CD4-positive, alpha-beta memory T cell (primary cell): ENCODE measurements at regions of chr2 and their contacts with region 1.

Region 1: DNA sequence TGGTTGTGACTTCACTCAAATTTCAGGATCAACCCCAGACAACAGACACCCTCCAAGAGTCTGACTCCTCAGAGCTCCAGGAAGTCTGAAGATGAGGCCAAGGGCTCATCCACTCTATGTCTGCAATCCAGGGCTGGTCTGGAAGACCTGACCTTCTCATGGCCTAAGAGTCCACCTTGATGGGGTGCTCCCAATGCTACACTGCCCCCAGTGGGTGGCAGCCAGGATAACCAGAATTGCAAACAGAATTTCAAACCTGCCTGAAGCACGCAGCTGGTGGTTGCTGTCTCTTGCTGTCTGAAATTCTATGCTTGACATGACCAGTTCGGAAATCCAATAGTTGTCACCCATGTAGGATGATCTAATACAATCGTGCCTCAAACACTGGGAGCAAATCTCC is 96.0 kb downstream of the UXS1 start:
- DNase-seq: no peak
- H3K4me3 ChIP-seq: no peak overlapping the region
- H3K4me3 Mint-ChIP-seq: peak overlapping the region in 3 of 8 donors; percentile 5 to 41 (median 34)
- H3K27ac ChIP-seq: peak overlapping the region; percentile 69
- H3K27ac Mint-ChIP-seq: peak overlapping the region in 6 of 7 donors; percentile 1 to 87 (median 50)
- H3K4me1 ChIP-seq: peaks cover 56% of the 10 kb centered on the region
- H3K4me1 Mint-ChIP-seq: peaks cover 25 to 57% (median 41%) of the 10 kb centered on the region in 4 donors
- H3K27me3 ChIP-seq: no peaks in the 10 kb centered on the region
- H3K27me3 Mint-ChIP-seq: no peaks in the 10 kb centered on the region

Region 2: GRCh38 chr2:105576440-105577252 is 521.4 kb before region 1 on chr2:
- CTCF ChIA-PET with region 1: interaction called, 5 read pairs
- POLR2A ChIA-PET with region 1: interaction called, 7 read pairs
- intact Hi-C with region 1: loop called (anchors 1 kb)
- DNase-seq: peak in 4 of 5 donors; percentile 47 to 56 (median 52)
- H3K4me3 ChIP-seq: no peak overlapping the region
- H3K4me3 Mint-ChIP-seq: peak overlapping the region in 2 of 8 donors; percentile 0 to 27
- H3K27ac ChIP-seq: no peak overlapping the region
- H3K27ac Mint-ChIP-seq: peak overlapping the region; percentile 6 to 94 (median 91)
- H3K4me1 ChIP-seq: peaks cover 13% of the 10 kb centered on the region
- H3K4me1 Mint-ChIP-seq: peaks cover 9 to 29% (median 14%) of the 10 kb centered on the region in 4 donors
- H3K27me3 ChIP-seq: no peaks in the 10 kb centered on the region
- H3K27me3 Mint-ChIP-seq: peaks cover 7% of the 10 kb centered on the region in 2 donors

Region 3: GRCh38 chr2:105789745-105790460 is 308.2 kb before region 1 on chr2:
- CTCF ChIA-PET with region 1: interaction called, 18 read pairs
- POLR2A ChIA-PET with region 1: interaction called, 19 read pairs
- intact Hi-C with region 1: no loop called
- DNase-seq: peak; percentile 56 to 92 (median 61)
- H3K4me3 ChIP-seq: peak overlapping the region in 1 of 2 donors; percentile 25
- H3K4me3 Mint-ChIP-seq: peak overlapping the region; percentile 78 to 92 (median 84)
- H3K27ac ChIP-seq: peak overlapping the region; percentile 79
- H3K27ac Mint-ChIP-seq: peak overlapping the region; percentile 92 to 98 (median 96)
- H3K4me1 ChIP-seq: peaks cover 98% of the 10 kb centered on the region
- H3K4me1 Mint-ChIP-seq: peaks cover 80 to 98% (median 87%) of the 10 kb centered on the region in 4 donors
- H3K27me3 ChIP-seq: no peaks in the 10 kb centered on the region
- H3K27me3 Mint-ChIP-seq: no peaks in the 10 kb centered on the region

Region 4: DNA sequence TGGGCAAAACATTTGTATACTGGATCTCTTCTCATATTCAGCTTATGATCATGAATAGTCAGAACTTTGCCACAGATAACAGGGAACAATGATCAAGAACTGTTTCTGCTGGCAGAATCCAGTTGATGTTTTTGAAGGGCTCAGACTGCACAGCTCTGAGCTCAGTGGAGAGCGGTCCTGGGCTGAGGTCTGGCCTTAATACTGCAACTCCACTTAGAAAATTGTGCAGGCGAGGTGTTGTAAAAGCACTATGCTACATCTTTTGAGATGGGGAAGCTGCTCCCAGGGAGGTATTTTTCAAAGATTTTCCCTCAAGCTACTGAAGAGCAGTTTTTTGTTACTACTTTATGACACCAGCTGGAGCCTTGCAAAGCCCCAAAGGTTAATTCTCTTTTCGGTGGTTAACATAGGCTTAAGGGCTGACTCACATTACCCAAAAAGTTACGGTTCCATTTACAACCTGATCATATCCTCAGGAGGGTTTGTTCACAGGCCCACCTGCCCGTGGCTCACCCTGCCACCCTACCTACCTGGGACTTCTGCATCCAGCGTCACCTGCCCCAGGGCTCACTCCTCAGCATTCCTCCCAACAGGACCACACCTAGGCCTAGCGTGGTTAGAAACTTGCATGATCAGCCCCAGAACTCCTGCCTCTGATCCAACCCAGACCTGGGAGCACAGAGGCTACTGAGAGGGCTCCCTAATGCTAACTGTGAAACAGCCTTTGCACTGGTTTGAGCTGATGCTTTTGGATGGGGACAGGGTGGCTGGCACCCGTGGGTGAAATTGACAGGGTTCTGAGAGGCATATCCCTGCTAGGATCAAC is 239.0 kb before region 1 on chr2:
- CTCF ChIA-PET with region 1: interaction called, 4 read pairs
- POLR2A ChIA-PET with region 1: interaction called, 21 read pairs
- intact Hi-C with region 1: loop called (anchors 2 kb)
- DNase-seq: peak in 1 of 5 donors; percentile 59
- H3K4me3 ChIP-seq: peak overlapping the region; percentile 6 to 20
- H3K4me3 Mint-ChIP-seq: peak overlapping the region in 7 of 8 donors; percentile 57 to 94 (median 81)
- H3K27ac ChIP-seq: peak overlapping the region; percentile 81
- H3K27ac Mint-ChIP-seq: peak overlapping the region; percentile 92 to 99 (median 95)
- H3K4me1 ChIP-seq: peaks cover 98% of the 10 kb centered on the region
- H3K4me1 Mint-ChIP-seq: peaks cover 76 to 94% (median 86%) of the 10 kb centered on the region in 4 donors
- H3K27me3 ChIP-seq: no peaks in the 10 kb centered on the region
- H3K27me3 Mint-ChIP-seq: no peaks in the 10 kb centered on the region

Region 5: GRCh38 chr2:106053116-106053515 is 45.0 kb before region 1 on chr2:
- CTCF ChIA-PET with region 1: interaction called, 5 read pairs
- POLR2A ChIA-PET with region 1: interaction called, 27 read pairs
- intact Hi-C with region 1: loop called (anchors 1 kb)
- DNase-seq: peak in 4 of 5 donors; percentile 31 to 39 (median 36)
- H3K4me3 ChIP-seq: no peak overlapping the region
- H3K4me3 Mint-ChIP-seq: peak overlapping the region; percentile 33 to 85 (median 71)
- H3K27ac ChIP-seq: no peak overlapping the region
- H3K27ac Mint-ChIP-seq: peak overlapping the region in 4 of 7 donors; percentile 21 to 82 (median 71)
- H3K4me1 ChIP-seq: peaks cover 65% of the 10 kb centered on the region
- H3K4me1 Mint-ChIP-seq: peaks cover 48 to 72% (median 63%) of the 10 kb centered on the region in 4 donors
- H3K27me3 ChIP-seq: no peaks in the 10 kb centered on the region
- H3K27me3 Mint-ChIP-seq: no peaks in the 10 kb centered on the region

Region 6: GRCh38 chr2:106120432-106120831 is 22.4 kb after region 1 on chr2:
- CTCF ChIA-PET with region 1: no interaction called
- POLR2A ChIA-PET with region 1: no interaction called
- intact Hi-C with region 1: no loop called
- DNase-seq: no peak
- H3K4me3 ChIP-seq: no peak overlapping the region
- H3K4me3 Mint-ChIP-seq: no peak overlapping the region
- H3K27ac ChIP-seq: no peak overlapping the region
- H3K27ac Mint-ChIP-seq: peak overlapping the region in 2 of 7 donors; percentile 1 to 70
- H3K4me1 ChIP-seq: peaks cover 6% of the 10 kb centered on the region
- H3K4me1 Mint-ChIP-seq: peaks cover 0 to 12% (median 6%) of the 10 kb centered on the region in 4 donors
- H3K27me3 ChIP-seq: no peaks in the 10 kb centered on the region
- H3K27me3 Mint-ChIP-seq: no peaks in the 10 kb centered on the region

Region 7: GRCh38 chr2:106147159-106147558 is 49.1 kb after region 1 on chr2:
- CTCF ChIA-PET with region 1: no interaction called
- POLR2A ChIA-PET with region 1: no interaction called
- intact Hi-C with region 1: no loop called
- DNase-seq: no peak
- H3K4me3 ChIP-seq: no peak overlapping the region
- H3K4me3 Mint-ChIP-seq: peak overlapping the region in 7 of 8 donors; percentile 29 to 79 (median 62)
- H3K27ac ChIP-seq: peak overlapping the region; percentile 28
- H3K27ac Mint-ChIP-seq: peak overlapping the region; percentile 74 to 97 (median 93)
- H3K4me1 ChIP-seq: peaks cover 75% of the 10 kb centered on the region
- H3K4me1 Mint-ChIP-seq: peaks cover 54 to 86% (median 67%) of the 10 kb centered on the region in 4 donors
- H3K27me3 ChIP-seq: no peaks in the 10 kb centered on the region
- H3K27me3 Mint-ChIP-seq: no peaks in the 10 kb centered on the region

Region 8: GRCh38 chr2:106193977-106194778 is 96.1 kb after region 1 on chr2 and contains the start of gene UXS1:
- CTCF ChIA-PET with region 1: no interaction called
- POLR2A ChIA-PET with region 1: interaction called, 3 read pairs
- intact Hi-C with region 1: loop called (anchors 2 kb)
- DNase-seq: peak; percentile 97 to 98 (median 98)
- H3K4me3 ChIP-seq: peak within 1 kb of the TSS; percentile 91 to 92
- H3K4me3 Mint-ChIP-seq: peak within 1 kb of the TSS; percentile 92 to 98 (median 96)
- H3K27ac ChIP-seq: peak within 1 kb of the TSS; percentile 76
- H3K27ac Mint-ChIP-seq: peak within 1 kb of the TSS; percentile 92 to 97 (median 94)
- H3K4me1 ChIP-seq: peaks cover 50% of the 10 kb centered on the region
- H3K4me1 Mint-ChIP-seq: peaks cover 35 to 48% (median 41%) of the 10 kb centered on the region in 4 donors
- H3K27me3 ChIP-seq: no peaks in the 10 kb centered on the region
- H3K27me3 Mint-ChIP-seq: no peaks in the 10 kb centered on the region
- total RNA-seq, gene UXS1: 143 to 150 TPM

Region 9: DNA sequence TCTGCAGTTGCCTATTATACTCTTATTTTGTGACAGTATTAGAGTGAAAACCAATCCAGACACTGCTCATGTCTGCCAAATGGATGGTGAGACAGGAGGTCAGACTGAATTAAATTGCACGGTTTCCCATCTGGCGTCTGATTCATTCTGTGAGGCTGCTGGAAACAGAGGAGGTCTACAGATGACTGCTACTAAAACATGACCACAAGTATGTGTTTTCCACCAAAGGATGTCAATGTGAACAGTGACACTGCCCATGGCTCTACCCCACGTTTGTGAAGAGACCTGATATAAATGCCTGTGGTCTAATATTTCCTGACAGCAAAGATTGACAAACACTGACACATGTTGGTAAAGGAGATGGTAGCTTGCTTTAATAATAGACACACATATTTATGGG is 892.2 kb after region 1 on chr2:
- CTCF ChIA-PET with region 1: no interaction called
- POLR2A ChIA-PET with region 1: no interaction called
- intact Hi-C with region 1: no loop called
- DNase-seq: no peak
- H3K4me3 ChIP-seq: no peak overlapping the region
- H3K4me3 Mint-ChIP-seq: no peak overlapping the region
- H3K27ac ChIP-seq: no peak overlapping the region
- H3K27ac Mint-ChIP-seq: no peak overlapping the region
- H3K4me1 ChIP-seq: no peaks in the 10 kb centered on the region
- H3K4me1 Mint-ChIP-seq: no peaks in the 10 kb centered on the region
- H3K27me3 ChIP-seq: no peaks in the 10 kb centered on the region
- H3K27me3 Mint-ChIP-seq: no peaks in the 10 kb centered on the region